MCF 10A (cell line): ENCODE measurements at regions of chr21 and their contacts with region 1.

Region 1: DNA sequence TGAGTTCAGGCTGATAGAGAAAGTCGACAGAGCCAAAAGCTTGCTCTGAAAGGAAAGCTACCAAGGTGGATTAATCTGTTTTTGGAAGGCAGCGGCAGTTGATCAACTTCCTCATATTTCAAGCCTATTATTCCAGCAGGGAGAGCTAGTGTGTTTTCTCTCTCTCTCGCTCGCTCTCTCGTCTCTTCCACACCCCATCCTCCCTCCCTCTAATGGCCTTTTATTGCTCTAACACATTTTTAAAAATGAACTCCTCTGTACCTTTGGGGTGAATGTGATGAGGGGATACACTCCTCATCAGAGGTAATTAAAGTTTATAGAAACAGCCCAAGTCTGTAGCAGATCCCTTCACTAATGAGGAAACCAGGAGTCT is 126.4 kb downstream of the CLIC6 start:
- DNase-seq: peak; percentile 43
- H3K4me3 Mint-ChIP-seq: peak overlapping the region; percentile 49
- H3K27ac Mint-ChIP-seq: peak overlapping the region; percentile 96
- H3K4me1 Mint-ChIP-seq: peaks cover 44% of the 10 kb centered on the region
- H3K27me3 Mint-ChIP-seq: no peaks in the 10 kb centered on the region
- CTCF ChIP-seq: no peak

Region 2: GRCh38 chr21:34771512-34772028 is 23.6 kb before region 1 on chr21:
- CTCF ChIA-PET with region 1: interaction called, 4 read pairs
- POLR2A ChIA-PET with region 1: interaction called, 15 read pairs
- intact Hi-C with region 1: no loop called
- DNase-seq: peak; percentile 86
- H3K4me3 Mint-ChIP-seq: no peak overlapping the region
- H3K27ac Mint-ChIP-seq: peak overlapping the region; percentile 89
- H3K4me1 Mint-ChIP-seq: peaks cover 32% of the 10 kb centered on the region
- H3K27me3 Mint-ChIP-seq: no peaks in the 10 kb centered on the region
- CTCF ChIP-seq: no peak

Region 3: DNA sequence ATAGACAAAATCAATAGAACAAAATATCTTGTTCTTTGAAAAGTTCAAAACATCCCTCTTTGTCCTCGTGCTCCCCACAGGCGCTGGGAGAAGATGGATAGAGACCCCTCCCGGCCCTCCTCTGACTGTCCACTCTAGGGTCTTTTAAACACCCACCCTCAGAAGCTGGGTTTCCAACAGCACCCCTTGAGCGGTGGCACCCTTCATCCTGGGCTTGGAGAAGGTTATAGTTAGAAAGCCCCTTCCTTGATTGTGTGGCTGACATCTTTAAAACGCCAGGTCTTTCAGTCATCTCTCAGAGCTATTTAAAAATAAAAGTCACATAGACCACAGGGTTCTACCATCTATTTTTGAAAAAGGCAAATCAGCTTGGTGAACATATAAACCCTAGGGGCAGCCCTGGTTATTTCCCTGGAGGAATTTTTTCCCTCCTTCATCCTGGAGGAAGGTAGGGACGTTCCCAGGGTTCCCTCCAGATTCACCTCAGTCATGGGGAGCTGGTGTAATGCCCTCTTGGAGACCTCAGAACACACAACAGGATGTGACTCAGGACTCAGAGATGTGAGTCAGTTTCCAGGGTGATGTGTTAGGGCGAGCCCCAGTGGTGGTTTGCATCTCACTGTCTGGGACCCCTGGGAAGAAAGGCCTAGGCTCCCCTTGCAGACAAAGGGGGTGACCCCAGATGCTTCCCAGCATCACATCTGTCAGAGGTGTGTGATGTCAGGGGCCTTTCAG is 12.2 kb after region 1 on chr21:
- CTCF ChIA-PET with region 1: interaction called, 21 read pairs
- POLR2A ChIA-PET with region 1: interaction called, 200 read pairs
- intact Hi-C with region 1: loop called (anchors 1 kb)
- DNase-seq: peak; percentile 98
- H3K4me3 Mint-ChIP-seq: peak overlapping the region; percentile 47
- H3K27ac Mint-ChIP-seq: peak overlapping the region; percentile 99
- H3K4me1 Mint-ChIP-seq: peaks cover 40% of the 10 kb centered on the region
- H3K27me3 Mint-ChIP-seq: no peaks in the 10 kb centered on the region
- CTCF ChIP-seq: no peak